WTC11 (cell line): ENCODE measurements at regions of chr15 and their contacts with region 1.

Region 1: DNA sequence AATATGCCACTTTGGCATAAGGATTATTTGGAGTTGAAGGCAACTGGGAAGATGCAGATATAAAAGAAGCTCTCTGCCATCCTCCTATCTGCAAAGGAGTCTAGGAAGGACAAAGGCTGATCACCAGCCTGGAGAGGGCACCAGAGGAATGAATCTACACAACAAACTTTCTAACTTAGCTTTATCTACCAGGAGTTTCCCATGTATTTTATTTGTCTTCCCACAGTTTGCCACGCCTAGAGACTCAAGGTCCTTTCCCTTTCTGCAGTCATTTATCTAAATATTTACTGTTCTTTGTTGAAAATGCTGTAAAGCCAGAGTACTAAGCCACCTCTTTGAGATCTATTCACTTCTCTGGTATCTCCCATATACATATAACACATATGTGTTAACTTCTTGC is 32.2 kb downstream of the GPR176 start:
- DNase-seq: no peak
- ATAC-seq: peak; percentile 44
- H3K4me3 Mint-ChIP-seq: peak overlapping the region; percentile 38
- H3K27ac Mint-ChIP-seq: peak overlapping the region; percentile 100
- H3K4me1 Mint-ChIP-seq: peaks cover 86% of the 10 kb centered on the region
- H3K27me3 Mint-ChIP-seq: no peaks in the 10 kb centered on the region
- CTCF ChIP-seq: no peak

Region 2: DNA sequence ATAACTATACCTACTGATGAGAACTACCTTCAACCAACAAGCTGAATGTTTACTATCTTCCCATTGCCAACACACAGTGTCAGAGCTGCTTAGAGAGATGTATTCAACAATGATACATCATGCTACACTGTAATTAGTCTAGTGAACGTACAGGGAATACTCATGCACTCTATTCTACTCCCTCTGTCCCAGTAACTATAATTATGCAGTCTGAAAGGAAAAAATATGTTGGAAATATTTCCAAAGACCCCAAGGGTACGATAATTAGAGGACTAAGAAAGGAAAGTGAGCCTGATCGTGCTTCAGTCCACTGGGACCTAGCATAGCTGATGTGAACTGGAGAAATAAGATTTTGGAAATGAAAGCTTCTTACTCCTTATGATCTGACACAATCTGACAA is 68.3 kb before region 1 on chr15:
- CTCF ChIA-PET with region 1: no interaction called
- POLR2A ChIA-PET with region 1: no interaction called
- DNase-seq: no peak
- ATAC-seq: no peak
- H3K4me3 Mint-ChIP-seq: no peak overlapping the region
- H3K27ac Mint-ChIP-seq: peak overlapping the region; percentile 39
- H3K4me1 Mint-ChIP-seq: peaks cover 63% of the 10 kb centered on the region
- H3K27me3 Mint-ChIP-seq: no peaks in the 10 kb centered on the region
- CTCF ChIP-seq: no peak

Region 3: DNA sequence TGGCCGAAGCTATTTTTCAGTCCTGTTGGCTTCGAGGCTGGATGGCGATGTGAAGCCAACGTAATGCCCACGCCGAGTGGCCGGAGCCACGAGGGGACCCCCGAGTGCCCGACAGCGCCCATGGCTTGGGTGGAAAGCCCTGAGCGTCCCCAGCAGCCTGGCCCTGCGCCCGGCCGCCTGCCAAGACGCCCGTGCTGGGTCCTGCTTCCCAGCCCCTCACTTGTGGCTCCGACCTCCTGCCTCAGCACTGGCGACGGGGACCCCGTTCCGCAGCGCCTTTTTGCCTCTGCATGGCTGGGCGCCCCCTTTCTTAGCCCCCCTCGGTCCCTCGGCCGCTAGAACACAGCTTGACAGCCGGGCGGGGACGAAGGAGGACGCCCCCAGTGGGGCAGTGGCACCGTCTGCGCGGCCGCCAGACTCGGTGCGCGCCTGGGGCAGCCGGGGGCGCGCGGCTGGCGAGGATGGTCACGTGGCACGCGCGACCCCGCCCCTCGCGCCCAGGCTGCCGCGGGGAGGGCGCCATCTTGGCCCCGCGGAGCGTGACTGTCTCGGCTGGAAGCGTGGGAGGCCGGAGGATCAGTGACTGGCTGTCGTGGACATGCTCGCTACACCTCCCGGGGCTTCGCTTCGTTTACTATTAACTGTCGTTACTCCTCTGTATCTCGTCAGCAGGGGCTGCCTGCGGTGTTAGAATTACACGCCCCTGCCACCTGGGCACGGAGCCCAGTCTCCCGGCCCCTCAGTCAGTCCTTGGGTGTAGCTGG is 32.9 kb after region 1 on chr15:
- CTCF ChIA-PET with region 1: interaction called, 19 read pairs
- POLR2A ChIA-PET with region 1: interaction called, 5 read pairs
- DNase-seq: peak; percentile 65
- ATAC-seq: peak; percentile 65
- H3K4me3 Mint-ChIP-seq: peak overlapping the region; percentile 85
- H3K27ac Mint-ChIP-seq: peak overlapping the region; percentile 8
- H3K4me1 Mint-ChIP-seq: peaks cover 59% of the 10 kb centered on the region
- H3K27me3 Mint-ChIP-seq: no peaks in the 10 kb centered on the region
- CTCF ChIP-seq: no peak

Region 4: DNA sequence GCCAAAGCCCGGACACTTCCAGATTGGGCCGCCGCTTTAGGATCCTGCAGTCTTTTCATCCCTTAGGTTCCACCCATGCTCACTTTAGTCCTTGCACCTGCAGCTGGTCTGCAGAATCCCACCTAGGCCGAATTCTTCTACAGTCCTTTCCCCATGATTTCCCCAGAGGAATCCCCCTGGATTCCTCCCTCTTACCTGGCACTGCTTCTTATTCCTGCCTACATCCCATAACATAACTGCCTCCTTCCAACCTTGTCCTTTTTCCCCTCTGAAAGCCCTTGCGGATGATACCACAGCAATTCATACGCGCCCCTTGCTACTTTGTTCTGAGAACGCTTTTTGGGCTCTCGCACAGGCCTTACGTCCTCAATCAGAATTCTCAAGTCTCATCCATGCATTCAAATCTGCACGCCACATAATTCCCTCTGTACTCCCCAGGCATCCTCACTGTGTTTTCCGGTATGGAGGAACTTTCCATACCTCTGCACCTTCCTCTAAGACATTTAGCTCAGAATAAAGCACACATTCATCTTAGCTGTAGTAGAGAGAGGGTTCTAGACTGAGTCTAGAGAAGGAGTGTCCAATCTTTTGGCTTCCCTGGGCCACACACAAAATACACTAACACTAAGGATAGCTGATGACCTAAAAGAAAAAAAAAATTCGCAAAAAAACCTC is 46.7 kb after region 1 on chr15:
- CTCF ChIA-PET with region 1: interaction called, 21 read pairs
- POLR2A ChIA-PET with region 1: interaction called, 3 read pairs
- DNase-seq: no peak
- ATAC-seq: peak; percentile 1; the same call in 1 of the 2 replicates
- H3K4me3 Mint-ChIP-seq: peak overlapping the region; percentile 89
- H3K27ac Mint-ChIP-seq: peak overlapping the region; percentile 78
- H3K4me1 Mint-ChIP-seq: peaks cover 52% of the 10 kb centered on the region
- H3K27me3 Mint-ChIP-seq: no peaks in the 10 kb centered on the region
- CTCF ChIP-seq: no peak